ENCODE measurements at regions of chr1 and their contacts with region 1.

Region 1: GRCh38 chr1:160539990-160540858 is 17.2 kb upstream of the SLAMF6 start:
- DNase-seq: peak; percentile 60
- ATAC-seq: peak; percentile 88
- H3K4me3 Mint-ChIP-seq: peak overlapping the region; percentile 35
- H3K27ac Mint-ChIP-seq: peak overlapping the region; percentile 94
- H3K4me1 Mint-ChIP-seq: peaks cover 67% of the 10 kb centered on the region
- H3K27me3 Mint-ChIP-seq: no peaks in the 10 kb centered on the region
- CTCF ChIP-seq: no peak

Region 2: GRCh38 chr1:160428655-160429054 is 111.6 kb before region 1 on chr1:
- CTCF ChIA-PET with region 1: interaction called, 15 read pairs
- POLR2A ChIA-PET with region 1: interaction called, 4 read pairs
- intact Hi-C with region 1: no loop called
- DNase-seq: peak; percentile 42
- ATAC-seq: peak; percentile 53
- H3K4me3 Mint-ChIP-seq: peak overlapping the region; percentile 54
- H3K27ac Mint-ChIP-seq: peak overlapping the region; percentile 85
- H3K4me1 Mint-ChIP-seq: peaks cover 61% of the 10 kb centered on the region
- H3K27me3 Mint-ChIP-seq: no peaks in the 10 kb centered on the region
- CTCF ChIP-seq: peak; percentile 74

Region 3: GRCh38 chr1:160519642-160520435 is 20.4 kb before region 1 on chr1:
- CTCF ChIA-PET with region 1: interaction called, 5 read pairs
- POLR2A ChIA-PET with region 1: interaction called, 17 read pairs
- intact Hi-C with region 1: no loop called
- DNase-seq: peak; percentile 73
- ATAC-seq: peak; percentile 64
- H3K4me3 Mint-ChIP-seq: peak overlapping the region; percentile 90
- H3K27ac Mint-ChIP-seq: peak overlapping the region; percentile 97
- H3K4me1 Mint-ChIP-seq: peaks cover 75% of the 10 kb centered on the region
- H3K27me3 Mint-ChIP-seq: no peaks in the 10 kb centered on the region
- CTCF ChIP-seq: peak; percentile 39

Region 4: GRCh38 chr1:160558660-160559380 is 18.6 kb after region 1 on chr1:
- CTCF ChIA-PET with region 1: interaction called, 100 read pairs
- POLR2A ChIA-PET with region 1: interaction called, 7 read pairs
- intact Hi-C with region 1: loop called (anchors 2 kb)
- DNase-seq: no peak
- ATAC-seq: peak; percentile 31
- H3K4me3 Mint-ChIP-seq: peak overlapping the region; percentile 62
- H3K27ac Mint-ChIP-seq: peak overlapping the region; percentile 95
- H3K4me1 Mint-ChIP-seq: peaks cover 68% of the 10 kb centered on the region
- H3K27me3 Mint-ChIP-seq: no peaks in the 10 kb centered on the region
- CTCF ChIP-seq: no peak

Region 5: GRCh38 chr1:160575112-160575664 is 35.0 kb after region 1 on chr1:
- CTCF ChIA-PET with region 1: interaction called, 12 read pairs
- POLR2A ChIA-PET with region 1: no interaction called
- intact Hi-C with region 1: no loop called
- DNase-seq: peak; percentile 31
- ATAC-seq: peak; percentile 59
- H3K4me3 Mint-ChIP-seq: peak overlapping the region; percentile 85
- H3K27ac Mint-ChIP-seq: peak overlapping the region; percentile 94
- H3K4me1 Mint-ChIP-seq: peaks cover 85% of the 10 kb centered on the region
- H3K27me3 Mint-ChIP-seq: no peaks in the 10 kb centered on the region
- CTCF ChIP-seq: no peak

Region 6: DNA sequence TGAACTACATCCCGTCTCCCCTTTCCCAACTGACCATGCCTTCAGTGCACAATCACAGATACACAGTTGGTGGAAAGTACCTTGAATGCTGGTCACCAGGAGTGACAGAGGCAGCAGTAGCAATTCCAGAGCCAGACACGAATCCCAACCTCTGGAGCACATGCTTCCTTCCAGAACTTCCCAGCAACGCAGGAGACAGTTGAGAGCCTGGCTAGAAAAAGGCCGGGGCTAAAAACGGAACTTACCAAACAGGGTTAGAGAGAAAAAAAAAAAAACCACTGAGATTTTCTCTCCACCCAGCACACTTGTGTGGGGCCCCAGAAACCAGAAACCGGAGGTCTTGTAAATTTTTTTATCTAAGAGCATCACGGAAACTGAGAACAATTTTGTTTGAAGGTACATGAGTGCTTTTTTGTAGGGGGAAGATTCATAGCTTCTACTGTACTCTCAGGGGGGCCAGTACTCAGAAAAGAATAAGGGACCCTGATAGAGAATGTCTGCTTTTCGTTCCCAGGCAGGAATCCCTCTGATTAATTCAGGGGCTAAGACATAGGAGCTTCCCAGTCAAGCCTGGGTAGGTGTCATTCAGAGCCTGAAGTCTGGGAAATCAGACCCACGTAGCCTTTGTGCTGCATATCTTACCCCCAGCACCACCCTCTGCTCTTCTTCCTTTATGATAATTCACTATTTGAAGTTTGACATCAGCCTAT is 171.5 kb after region 1 on chr1 and contains the start of gene CD48:
- CTCF ChIA-PET with region 1: no interaction called
- POLR2A ChIA-PET with region 1: no interaction called
- intact Hi-C with region 1: no loop called
- DNase-seq: peak; percentile 75
- ATAC-seq: peak; percentile 37
- H3K4me3 Mint-ChIP-seq: no peak within 1 kb of the TSS
- H3K27ac Mint-ChIP-seq: no peak within 1 kb of the TSS
- H3K4me1 Mint-ChIP-seq: peaks cover 37% of the 10 kb centered on the region
- H3K27me3 Mint-ChIP-seq: no peaks in the 10 kb centered on the region
- CTCF ChIP-seq: no peak
- total RNA-seq, gene CD48: 379 to 388 TPM

Measured in activated CD8-positive, alpha-beta T cell treated with anti-CD3 and anti-CD28 coated beads for 36 hours (primary cell).